ENCODE measurements at regions of chr19 and their contacts with region 1.

Region 1: GRCh38 chr19:39916851-39917396 is 17.5 kb downstream of the FCGBP start:
- DNase-seq: no peak
- ATAC-seq: peak; percentile 7; the same call in 1 of the 2 replicates
- H3K4me3 ChIP-seq: no peak overlapping the region
- H3K27ac ChIP-seq: no peak overlapping the region
- H3K4me1 ChIP-seq: no peaks in the 10 kb centered on the region
- H3K27me3 ChIP-seq: no peaks in the 10 kb centered on the region
- CTCF ChIP-seq: no peak

Region 2: GRCh38 chr19:39038098-39038497 is 878.8 kb before region 1 on chr19:
- CTCF ChIA-PET with region 1: no interaction called
- POLR2A ChIA-PET with region 1: interaction called, 12 read pairs
- in situ Hi-C with region 1: no loop called
- intact Hi-C with region 1: no loop called
- DNase-seq: no peak
- ATAC-seq: peak; percentile 96
- H3K4me3 ChIP-seq: peak overlapping the region in 1 of 2 experiments; percentile 5; a peak in 2 of 4 replicates
- H3K27ac ChIP-seq: peak overlapping the region; percentile 3; the same call in 1 of the 2 replicates
- H3K4me1 ChIP-seq: peaks cover 11% of the 10 kb centered on the region
- H3K27me3 ChIP-seq: no peaks in the 10 kb centered on the region
- CTCF ChIP-seq: no peak

Region 3: GRCh38 chr19:39824143-39825092 is 92.5 kb before region 1 on chr19:
- CTCF ChIA-PET with region 1: no interaction called
- POLR2A ChIA-PET with region 1: no interaction called
- in situ Hi-C with region 1: no loop called
- intact Hi-C with region 1: no loop called
- DNase-seq: peak; percentile 100
- ATAC-seq: peak; percentile 97
- H3K4me3 ChIP-seq: peak overlapping the region; percentile 37 to 51
- H3K27ac ChIP-seq: peak overlapping the region; percentile 78
- H3K4me1 ChIP-seq: peaks cover 22% of the 10 kb centered on the region
- H3K27me3 ChIP-seq: no peaks in the 10 kb centered on the region
- CTCF ChIP-seq: no peak

Region 4: GRCh38 chr19:39929750-39930149 is 12.8 kb after region 1 on chr19:
- CTCF ChIA-PET with region 1: interaction called, 8 read pairs
- POLR2A ChIA-PET with region 1: interaction called, 24 read pairs
- in situ Hi-C with region 1: no loop called
- intact Hi-C with region 1: no loop called
- DNase-seq: no peak
- ATAC-seq: no peak
- H3K4me3 ChIP-seq: no peak overlapping the region
- H3K27ac ChIP-seq: no peak overlapping the region
- H3K4me1 ChIP-seq: no peaks in the 10 kb centered on the region
- H3K27me3 ChIP-seq: peaks cover 14% of the 10 kb centered on the region
- CTCF ChIP-seq: no peak

Region 5: DNA sequence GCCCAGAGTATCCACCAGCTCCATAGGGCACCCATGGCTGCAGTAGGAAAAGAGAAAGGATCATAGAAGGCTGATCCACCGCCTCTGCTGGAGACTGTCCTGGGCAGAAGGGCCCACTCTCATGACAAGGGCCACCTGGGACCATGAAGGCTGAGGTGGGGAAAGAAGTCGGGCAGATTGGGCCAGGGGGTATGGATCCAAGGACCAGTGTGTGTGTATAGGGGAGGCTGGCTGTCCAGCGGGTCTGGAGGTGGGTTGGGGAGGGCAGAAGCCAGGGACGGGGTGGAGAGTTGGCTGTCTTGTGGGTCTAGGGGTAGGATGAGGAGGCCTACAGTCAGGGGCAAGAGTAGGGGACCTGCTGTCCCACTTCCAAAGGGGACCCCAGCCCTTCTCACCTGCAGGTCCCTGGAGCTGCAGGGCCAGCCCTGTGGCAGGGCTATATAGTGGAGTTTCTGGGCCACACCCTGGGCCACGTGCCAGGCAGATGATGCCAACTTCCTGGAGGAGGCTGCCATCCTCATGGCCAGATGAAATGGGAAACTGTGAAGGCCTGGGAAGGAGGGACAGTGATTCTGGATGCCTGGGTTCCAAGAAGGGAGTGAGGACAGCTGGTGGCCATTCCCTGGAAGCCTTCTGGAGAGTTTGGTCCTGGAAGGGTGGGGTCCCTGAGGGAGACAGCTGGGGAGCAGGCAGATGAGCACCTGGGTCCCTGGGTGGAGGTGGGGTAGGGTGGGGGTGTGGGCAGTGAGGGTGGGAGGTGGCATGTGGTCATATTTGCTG is 17.9 kb after region 1 on chr19 and contains the start of gene FCGBP:
- CTCF ChIA-PET with region 1: interaction called, 3 read pairs
- POLR2A ChIA-PET with region 1: interaction called, 24 read pairs
- in situ Hi-C with region 1: no loop called
- intact Hi-C with region 1: no loop called
- DNase-seq: no peak
- ATAC-seq: peak; percentile 31
- H3K4me3 ChIP-seq: no peak within 1 kb of the TSS
- H3K27ac ChIP-seq: no peak within 1 kb of the TSS
- H3K4me1 ChIP-seq: no peaks in the 10 kb centered on the region
- H3K27me3 ChIP-seq: peaks cover 30% of the 10 kb centered on the region
- CTCF ChIP-seq: no peak
- total RNA-seq, gene FCGBP: 6.4 TPM

Region 6: GRCh38 chr19:40147693-40148347 is 230.9 kb after region 1 on chr19:
- CTCF ChIA-PET with region 1: no interaction called
- POLR2A ChIA-PET with region 1: interaction called, 13 read pairs
- in situ Hi-C with region 1: no loop called
- intact Hi-C with region 1: no loop called
- DNase-seq: peak; percentile 100
- ATAC-seq: peak; percentile 87
- H3K4me3 ChIP-seq: peak overlapping the region; percentile 24 to 50
- H3K27ac ChIP-seq: peak overlapping the region; percentile 42
- H3K4me1 ChIP-seq: peaks cover 14% of the 10 kb centered on the region
- H3K27me3 ChIP-seq: no peaks in the 10 kb centered on the region
- CTCF ChIP-seq: no peak

Measured in Panc1 (cell line).